Thyroid gland (tissue), 4 donors: ENCODE measurements at regions of chr10 and their contacts with region 1.

Region 1: DNA sequence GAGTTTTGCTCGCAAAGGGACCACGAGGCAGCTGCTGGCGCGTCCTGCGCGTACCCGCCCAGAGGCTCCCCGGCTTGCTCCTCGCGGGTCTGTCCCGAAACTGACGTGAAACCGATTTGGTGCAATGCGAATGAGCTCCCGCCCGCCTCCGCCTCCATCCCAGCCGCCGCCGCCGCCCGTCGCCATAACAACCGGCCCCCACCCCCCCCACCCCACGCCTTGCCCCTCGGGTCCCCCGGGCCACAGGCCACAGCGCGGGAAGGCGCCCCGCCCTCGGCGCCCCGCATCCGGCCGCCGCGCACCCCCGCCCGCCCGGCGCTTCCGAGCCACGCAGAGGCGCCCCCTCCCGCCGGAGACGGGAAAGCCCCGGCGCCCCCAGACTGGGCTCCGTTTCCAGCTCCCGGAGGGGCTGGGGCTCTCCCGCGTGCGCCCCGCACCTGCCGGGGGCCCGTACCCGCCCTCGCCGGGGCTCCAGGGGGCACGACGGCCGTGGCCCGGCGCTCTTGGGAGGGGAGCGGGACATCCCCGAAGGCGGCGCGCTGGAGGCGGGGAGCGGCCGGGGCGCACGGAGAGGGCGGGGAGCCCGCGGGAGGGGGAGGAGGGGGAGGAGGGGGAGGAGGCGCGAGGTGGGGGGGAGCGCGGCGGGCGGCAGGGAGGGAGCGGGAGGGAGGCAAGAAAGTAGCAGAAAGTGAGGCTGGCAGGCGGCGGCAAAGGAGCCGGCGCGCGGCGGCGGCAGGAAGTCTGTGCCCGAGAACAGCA is at the start of gene CAMK1D:
- DNase-seq: peak; percentile 83 to 86
- H3K4me3 ChIP-seq: peak within 1 kb of the TSS; percentile 66 to 95 (median 71)
- H3K27ac ChIP-seq: peak within 1 kb of the TSS; percentile 74 to 93 (median 80)
- H3K4me1 ChIP-seq: peaks cover 4 to 14% of the 10 kb centered on the region in 2 donors
- H3K27me3 ChIP-seq: no peaks in the 10 kb centered on the region
- CTCF ChIP-seq: peak in 3 of 6 experiments; percentile 30 to 54 (median 37)
- POLR2A ChIP-seq: peak in 1 of 2 donors; percentile 76
- total RNA-seq, gene CAMK1D: 12.2 to 29.6 (median 17.4) TPM

Region 2: GRCh38 chr10:12121673-12122072 is 227.4 kb before region 1 on chr10:
- intact Hi-C with region 1: no loop called
- DNase-seq: no peak
- H3K4me3 ChIP-seq: no peak overlapping the region
- H3K27ac ChIP-seq: peak overlapping the region in 1 of 3 donors; percentile 81
- H3K4me1 ChIP-seq: peaks cover 15 to 26% of the 10 kb centered on the region in 2 donors
- H3K27me3 ChIP-seq: no peaks in the 10 kb centered on the region
- CTCF ChIP-seq: no peak
- POLR2A ChIP-seq: no peak

Region 3: DNA sequence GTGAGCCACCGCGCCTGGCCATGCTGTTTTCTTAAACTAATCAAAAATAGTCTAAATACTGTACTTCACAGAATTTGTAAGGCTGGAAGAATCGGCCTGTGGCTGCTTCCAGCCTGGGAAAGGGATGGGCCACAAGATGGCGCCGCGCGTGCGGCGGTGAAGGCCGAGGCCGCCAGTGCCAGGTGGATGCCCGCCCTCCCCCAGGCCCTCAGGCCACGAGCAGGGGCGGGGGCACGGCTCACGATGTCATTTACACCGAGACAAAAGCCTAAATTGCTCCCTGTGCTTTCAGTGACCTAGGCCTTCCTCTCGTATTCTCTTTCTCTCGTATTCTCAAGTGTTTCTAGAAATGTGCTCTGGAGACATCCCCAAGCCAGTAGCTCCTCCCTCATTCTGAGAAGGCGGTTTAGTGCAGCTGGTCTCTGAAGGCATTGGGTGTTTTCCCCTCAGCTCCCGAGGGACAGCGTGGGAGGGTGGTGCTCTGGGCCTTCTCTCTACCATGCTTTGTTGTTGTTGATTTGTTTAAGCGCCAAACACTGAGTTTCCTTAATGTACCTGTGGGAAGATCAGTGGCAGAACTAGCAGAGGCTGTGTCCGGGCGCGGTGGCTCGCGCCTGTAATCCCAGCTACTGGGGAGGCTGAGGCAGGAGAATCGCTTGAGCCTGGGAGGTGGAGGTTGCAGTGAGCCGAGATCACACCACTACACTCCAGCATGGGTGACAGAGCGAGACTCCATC is 84.7 kb before region 1 on chr10:
- intact Hi-C with region 1: loop called (anchors 10 kb)
- DNase-seq: peak; percentile 83
- H3K4me3 ChIP-seq: peak overlapping the region in 1 of 3 donors; percentile 5
- H3K27ac ChIP-seq: peak overlapping the region; percentile 38 to 62 (median 54)
- H3K4me1 ChIP-seq: peaks cover 12 to 14% of the 10 kb centered on the region in 2 donors
- H3K27me3 ChIP-seq: no peaks in the 10 kb centered on the region
- CTCF ChIP-seq: peak; percentile 48 to 91 (median 72)
- POLR2A ChIP-seq: no peak

Region 4: DNA sequence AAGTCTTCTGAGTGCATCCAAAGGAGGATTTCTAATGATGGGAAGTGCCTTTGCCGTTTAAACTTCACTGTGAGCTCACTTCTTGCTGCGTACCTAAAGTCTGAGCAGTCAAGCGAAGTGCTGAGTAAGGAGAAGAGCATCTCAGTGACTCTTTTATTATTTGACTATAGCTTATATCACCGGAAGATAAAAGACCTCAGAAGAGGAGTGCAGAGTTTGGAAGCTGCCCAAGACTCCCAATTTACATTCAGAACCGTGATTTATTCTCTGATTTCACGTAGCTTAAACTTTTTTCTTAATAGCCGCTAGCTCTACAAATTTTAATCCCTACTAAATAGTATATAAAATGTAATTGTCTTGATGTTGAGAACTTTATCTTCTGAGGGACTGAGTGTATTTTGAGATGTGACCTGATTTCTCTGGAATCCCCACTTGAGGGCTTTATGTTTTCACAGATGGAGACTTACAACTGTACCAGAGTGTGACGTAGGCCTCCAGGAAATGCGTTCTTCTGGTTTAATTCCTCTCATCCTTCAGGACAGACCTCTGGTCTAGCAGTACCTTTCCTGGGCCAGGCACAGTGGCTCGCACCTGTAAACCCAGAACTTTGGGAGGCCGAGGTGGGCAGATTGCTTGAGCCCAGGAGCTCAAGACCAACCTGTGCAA is 51.4 kb after region 1 on chr10:
- intact Hi-C with region 1: no loop called
- DNase-seq: peak; percentile 55 to 58
- H3K4me3 ChIP-seq: no peak overlapping the region
- H3K27ac ChIP-seq: peak overlapping the region; percentile 31 to 56 (median 32)
- H3K4me1 ChIP-seq: peaks cover 28 to 48% of the 10 kb centered on the region in 2 donors
- H3K27me3 ChIP-seq: no peaks in the 10 kb centered on the region
- CTCF ChIP-seq: no peak
- POLR2A ChIP-seq: no peak